ENCODE measurements at regions of chr1 and their contacts with region 1.

Region 1: GRCh38 chr1:240149484-240150094 is 57.9 kb downstream of the FMN2 start:
- DNase-seq: peak; percentile 75
- H3K4me3 Mint-ChIP-seq: no peak overlapping the region
- H3K27ac Mint-ChIP-seq: no peak overlapping the region
- H3K4me1 Mint-ChIP-seq: no peaks in the 10 kb centered on the region
- H3K27me3 Mint-ChIP-seq: peaks cover 13% of the 10 kb centered on the region
- CTCF ChIP-seq: peak; percentile 86

Region 2: GRCh38 chr1:239951511-239952140 is 198.0 kb before region 1 on chr1:
- CTCF ChIA-PET with region 1: interaction called, 11 read pairs
- POLR2A ChIA-PET with region 1: no interaction called
- intact Hi-C with region 1: loop called (anchors 2 kb)
- DNase-seq: peak; percentile 92
- H3K4me3 Mint-ChIP-seq: no peak overlapping the region
- H3K27ac Mint-ChIP-seq: no peak overlapping the region
- H3K4me1 Mint-ChIP-seq: no peaks in the 10 kb centered on the region
- H3K27me3 Mint-ChIP-seq: no peaks in the 10 kb centered on the region
- CTCF ChIP-seq: peak; percentile 95

Region 3: DNA sequence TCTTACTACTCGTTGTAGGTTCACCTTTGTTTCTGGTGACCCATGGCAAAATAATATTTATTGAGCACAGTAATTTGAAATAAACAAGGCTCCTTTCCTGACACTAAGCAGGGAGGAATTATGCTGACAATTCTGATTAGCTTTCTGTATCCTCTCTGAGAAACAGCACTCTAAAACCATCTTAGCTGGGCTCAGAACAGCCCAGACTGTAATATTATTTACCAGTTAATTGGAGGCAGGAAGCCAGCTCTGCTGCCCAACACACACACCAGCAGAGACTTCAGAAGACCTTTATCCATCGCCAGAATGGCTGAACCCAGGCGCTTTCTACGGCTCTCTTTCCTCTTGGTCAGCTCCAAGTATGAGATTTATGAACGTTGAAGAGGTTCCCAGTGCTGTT is 135.5 kb before region 1 on chr1:
- CTCF ChIA-PET with region 1: interaction called, 18 read pairs
- POLR2A ChIA-PET with region 1: no interaction called
- intact Hi-C with region 1: no loop called
- DNase-seq: no peak
- H3K4me3 Mint-ChIP-seq: no peak overlapping the region
- H3K27ac Mint-ChIP-seq: no peak overlapping the region
- H3K4me1 Mint-ChIP-seq: no peaks in the 10 kb centered on the region
- H3K27me3 Mint-ChIP-seq: no peaks in the 10 kb centered on the region
- CTCF ChIP-seq: no peak

Region 4: DNA sequence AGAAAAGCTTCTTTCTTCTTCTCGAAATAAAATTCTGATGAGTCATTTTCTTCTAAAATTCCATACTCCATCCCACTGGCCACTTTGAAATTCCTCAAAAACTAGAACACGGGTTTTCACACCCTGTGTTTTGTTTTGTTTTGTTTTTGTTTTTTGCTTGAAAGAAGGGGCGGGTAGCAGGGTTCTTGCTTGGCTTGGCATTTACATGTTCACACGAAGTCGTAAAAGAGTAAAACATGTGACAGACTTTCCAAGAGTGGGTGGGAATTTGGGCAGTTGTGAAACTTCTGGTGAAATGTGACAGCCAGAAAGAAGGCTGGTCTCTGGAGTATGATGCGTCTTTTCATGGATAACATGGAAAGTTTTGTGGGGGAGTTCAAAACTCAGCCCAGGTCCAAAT is 105.0 kb before region 1 on chr1:
- CTCF ChIA-PET with region 1: interaction called, 18 read pairs
- POLR2A ChIA-PET with region 1: no interaction called
- intact Hi-C with region 1: no loop called
- DNase-seq: peak; percentile 47
- H3K4me3 Mint-ChIP-seq: no peak overlapping the region
- H3K27ac Mint-ChIP-seq: no peak overlapping the region
- H3K4me1 Mint-ChIP-seq: no peaks in the 10 kb centered on the region
- H3K27me3 Mint-ChIP-seq: no peaks in the 10 kb centered on the region
- CTCF ChIP-seq: no peak

Region 5: GRCh38 chr1:240116831-240117769 is 32.5 kb before region 1 on chr1:
- CTCF ChIA-PET with region 1: interaction called, 11 read pairs
- POLR2A ChIA-PET with region 1: no interaction called
- intact Hi-C with region 1: no loop called
- DNase-seq: no peak
- H3K4me3 Mint-ChIP-seq: no peak overlapping the region
- H3K27ac Mint-ChIP-seq: no peak overlapping the region
- H3K4me1 Mint-ChIP-seq: no peaks in the 10 kb centered on the region
- H3K27me3 Mint-ChIP-seq: no peaks in the 10 kb centered on the region
- CTCF ChIP-seq: no peak

Region 6: GRCh38 chr1:240169188-240169587 is 19.6 kb after region 1 on chr1:
- CTCF ChIA-PET with region 1: interaction called, 157 read pairs
- POLR2A ChIA-PET with region 1: no interaction called
- intact Hi-C with region 1: no loop called
- DNase-seq: peak; percentile 59
- H3K4me3 Mint-ChIP-seq: no peak overlapping the region
- H3K27ac Mint-ChIP-seq: no peak overlapping the region
- H3K4me1 Mint-ChIP-seq: no peaks in the 10 kb centered on the region
- H3K27me3 Mint-ChIP-seq: no peaks in the 10 kb centered on the region
- CTCF ChIP-seq: peak; percentile 61

Region 7: GRCh38 chr1:240207073-240207709 is 57.6 kb after region 1 on chr1:
- CTCF ChIA-PET with region 1: no interaction called
- POLR2A ChIA-PET with region 1: no interaction called
- intact Hi-C with region 1: no loop called
- DNase-seq: no peak
- H3K4me3 Mint-ChIP-seq: no peak overlapping the region
- H3K27ac Mint-ChIP-seq: no peak overlapping the region
- H3K4me1 Mint-ChIP-seq: peaks cover 5% of the 10 kb centered on the region
- H3K27me3 Mint-ChIP-seq: no peaks in the 10 kb centered on the region
- CTCF ChIP-seq: no peak

Region 8: GRCh38 chr1:240234485-240235210 is 85.1 kb after region 1 on chr1:
- CTCF ChIA-PET with region 1: no interaction called
- POLR2A ChIA-PET with region 1: no interaction called
- intact Hi-C with region 1: no loop called
- DNase-seq: peak; percentile 42
- H3K4me3 Mint-ChIP-seq: no peak overlapping the region
- H3K27ac Mint-ChIP-seq: no peak overlapping the region
- H3K4me1 Mint-ChIP-seq: no peaks in the 10 kb centered on the region
- H3K27me3 Mint-ChIP-seq: no peaks in the 10 kb centered on the region
- CTCF ChIP-seq: no peak

Region 9: GRCh38 chr1:240649733-240650660 is 500.4 kb after region 1 on chr1:
- CTCF ChIA-PET with region 1: interaction called, 11 read pairs
- POLR2A ChIA-PET with region 1: no interaction called
- intact Hi-C with region 1: no loop called
- DNase-seq: peak; percentile 40
- H3K4me3 Mint-ChIP-seq: no peak overlapping the region
- H3K27ac Mint-ChIP-seq: no peak overlapping the region
- H3K4me1 Mint-ChIP-seq: peaks cover 4% of the 10 kb centered on the region
- H3K27me3 Mint-ChIP-seq: no peaks in the 10 kb centered on the region
- CTCF ChIP-seq: no peak

Measured in MCF 10A (cell line).